ENCODE measurements at regions of chr15 and their contacts with region 1.

Region 1: DNA sequence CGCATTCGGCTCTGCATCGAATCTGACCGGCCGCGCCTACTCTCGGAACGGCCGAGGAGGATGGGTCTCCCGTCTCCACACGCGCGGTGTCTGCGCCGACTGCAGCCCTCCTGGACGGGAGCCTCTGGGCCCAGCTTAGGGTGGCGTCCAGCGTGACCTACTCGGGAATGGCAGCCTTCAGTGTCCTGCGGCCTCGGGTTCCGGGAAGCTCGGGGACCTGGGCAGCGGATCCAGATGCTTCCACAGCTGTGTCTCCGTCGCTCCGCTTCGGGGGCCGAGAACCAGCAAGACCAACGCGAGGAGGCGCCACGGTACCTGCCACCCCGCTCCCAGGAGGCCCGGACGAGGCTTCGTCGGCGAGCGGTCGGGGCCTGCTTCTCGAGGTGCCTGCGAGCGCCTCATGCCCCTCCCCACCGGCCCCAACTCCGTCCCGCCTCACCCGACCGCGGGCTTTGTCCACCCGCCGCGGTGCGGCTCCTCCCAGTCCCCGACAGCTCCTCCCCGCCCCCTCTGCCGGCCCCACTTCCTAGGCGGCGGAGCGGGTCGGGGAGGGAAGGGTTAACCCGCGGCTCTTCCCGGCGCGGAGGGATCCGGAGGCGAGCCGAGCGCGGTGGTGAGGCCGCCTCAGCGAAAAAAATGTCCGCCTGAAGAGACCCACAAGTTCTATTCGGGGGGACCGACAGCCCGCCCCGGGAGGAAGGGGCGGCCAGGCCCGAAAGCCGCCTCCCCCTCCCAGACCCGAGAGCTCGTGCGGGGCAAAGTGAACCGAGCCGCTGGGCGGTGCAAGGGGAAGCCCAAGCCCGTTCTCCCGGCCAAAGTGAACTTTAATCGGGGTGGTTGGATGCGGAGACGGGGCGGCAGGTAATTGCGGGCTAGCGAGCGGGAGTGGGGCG is at the start of gene TCF12:
- DNase-seq: peak; percentile 96
- ATAC-seq: peak; percentile 95 to 98 (median 97)
- H3K4me3 ChIP-seq: peak within 1 kb of the TSS; percentile 84 to 97 (median 91)
- H3K27ac ChIP-seq: peak within 1 kb of the TSS; percentile 93 to 98 (median 98)
- H3K4me1 ChIP-seq: peaks cover 3 to 68% (median 60%) of the 10 kb centered on the region in 9 donors
- H3K27me3 ChIP-seq: no peaks in the 10 kb centered on the region
- CTCF ChIP-seq: peak in 8 of 9 donors; percentile 22 to 67 (median 51)
- total RNA-seq, gene TCF12: 29.2 to 55.7 (median 39.4) TPM

Region 2: DNA sequence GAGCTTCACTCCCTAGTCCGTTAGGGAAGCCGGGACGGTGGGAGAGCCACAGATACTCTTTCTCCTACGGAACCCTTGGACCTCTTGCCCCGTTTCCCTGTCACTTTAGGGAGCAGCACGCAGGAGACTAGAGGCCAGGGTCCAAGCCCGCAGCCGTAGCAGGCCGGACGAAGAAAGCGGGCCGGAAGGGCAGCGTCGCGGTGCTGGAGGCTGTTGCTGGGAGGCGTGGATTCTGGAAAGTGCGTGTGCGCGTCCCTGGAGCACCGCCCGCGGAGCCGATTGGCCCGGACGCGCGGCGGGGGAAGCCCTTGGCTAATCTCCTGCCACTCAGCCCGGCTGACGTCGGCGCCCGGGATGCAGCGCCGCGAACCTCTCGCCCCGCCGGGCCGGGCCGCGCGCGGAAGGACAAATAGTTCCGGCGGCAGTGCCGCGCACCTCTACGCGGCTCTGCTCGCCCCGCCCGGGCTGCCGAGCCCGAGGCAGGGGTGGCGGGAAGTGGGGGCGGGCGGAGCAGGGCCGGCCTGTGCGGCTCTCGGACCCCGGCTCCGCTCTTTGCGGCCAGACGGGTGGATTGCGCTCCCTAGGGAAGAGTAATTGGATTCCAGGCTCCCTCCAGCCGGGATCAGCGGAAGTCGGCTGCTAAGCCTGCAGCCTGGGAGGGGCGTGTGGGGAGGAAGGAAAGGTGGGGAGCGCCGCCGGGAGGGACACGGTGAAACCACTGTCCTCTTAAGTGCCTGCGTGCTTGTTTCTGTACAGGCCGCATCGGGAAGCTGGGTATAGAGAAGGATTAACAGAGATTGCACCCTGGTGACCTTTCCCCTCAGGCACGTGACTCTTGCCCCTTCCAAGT is 31.1 kb before region 1 on chr15:
- intact Hi-C with region 1: loop called in 8 of 10 experiments (anchors 1 to 2 kb)
- DNase-seq: peak; percentile 95 to 96
- ATAC-seq: peak; percentile 97 to 99 (median 98)
- H3K4me3 ChIP-seq: peak overlapping the region; percentile 51 to 78 (median 68)
- H3K27ac ChIP-seq: peak overlapping the region; percentile 96 to 99 (median 98)
- H3K4me1 ChIP-seq: peaks cover 0 to 33% (median 21%) of the 10 kb centered on the region in 9 donors
- H3K27me3 ChIP-seq: no peaks in the 10 kb centered on the region
- CTCF ChIP-seq: peak in 4 of 9 donors; percentile 10 to 32 (median 20)

Region 3: DNA sequence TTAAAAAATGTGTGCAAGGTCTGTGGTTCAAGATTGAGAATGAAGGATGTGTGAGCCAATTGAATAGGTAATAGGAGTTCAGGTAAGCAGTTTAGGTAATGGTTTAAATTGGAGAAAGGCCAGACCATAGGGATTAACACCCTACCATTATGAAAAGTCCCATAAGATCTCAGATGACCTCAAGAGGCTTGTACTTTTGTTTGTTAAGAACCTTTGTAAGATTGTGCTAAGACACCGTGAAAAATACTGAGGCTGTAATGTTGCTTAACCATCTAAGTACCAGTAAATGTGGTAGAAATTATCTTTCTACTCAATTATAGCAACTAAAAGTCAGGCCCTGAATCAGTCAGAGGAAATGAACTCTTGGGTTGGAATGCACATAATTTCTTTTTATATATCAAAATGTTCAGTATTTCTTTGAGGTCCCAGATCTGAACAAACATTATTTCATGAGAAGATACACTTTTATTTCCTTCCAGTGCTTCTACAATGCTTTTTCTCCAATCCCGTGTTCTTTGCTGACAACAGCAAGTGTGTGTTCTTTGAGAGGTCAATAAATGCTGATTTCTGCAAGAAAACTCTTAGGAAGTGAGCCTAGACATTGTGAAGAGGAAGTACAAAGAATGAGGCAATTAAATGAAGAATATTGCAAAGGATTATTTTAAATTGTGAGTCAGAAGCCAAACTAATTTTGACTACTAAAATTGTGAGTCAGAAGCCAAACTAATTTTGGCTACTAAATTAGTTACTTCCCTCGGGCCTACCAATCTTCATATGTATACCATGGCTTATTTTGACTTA is 66.6 kb after region 1 on chr15:
- intact Hi-C with region 1: loop called in 1 of 10 experiments (anchors 5 kb)
- DNase-seq: no peak
- ATAC-seq: peak in 5 of 8 donors; percentile 38 to 73 (median 57)
- H3K4me3 ChIP-seq: no peak overlapping the region
- H3K27ac ChIP-seq: peak overlapping the region in 3 of 10 donors; percentile 23 to 56 (median 33)
- H3K4me1 ChIP-seq: peaks cover 2 to 92% (median 71%) of the 10 kb centered on the region in 9 donors
- H3K27me3 ChIP-seq: no peaks in the 10 kb centered on the region
- CTCF ChIP-seq: no peak

Region 4: DNA sequence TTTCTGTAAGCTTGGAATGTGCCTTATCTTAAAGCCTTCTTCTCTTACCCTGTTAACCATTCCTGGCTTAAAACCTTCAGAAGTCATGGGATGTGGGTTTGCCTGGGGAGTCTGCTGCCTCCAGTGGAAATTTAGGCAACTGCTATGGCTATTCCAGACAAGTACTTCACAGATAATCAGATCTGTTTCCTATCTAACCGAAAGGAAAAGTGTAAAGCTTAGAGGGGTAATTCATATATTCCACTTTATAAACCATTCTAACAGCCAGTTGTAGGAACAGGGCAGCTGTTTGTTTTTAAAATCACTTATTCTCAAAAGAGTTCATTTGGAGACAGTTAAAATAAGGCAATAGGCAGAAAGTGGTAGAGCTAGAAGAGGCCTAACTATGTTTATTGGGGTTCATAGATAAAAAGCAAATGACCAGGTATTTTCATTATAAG is 220.1 kb after region 1 on chr15:
- intact Hi-C with region 1: loop called in 8 of 10 experiments (anchors 5 to 10 kb)
- DNase-seq: peak in 1 of 2 donors; percentile 42
- ATAC-seq: peak; percentile 25 to 81 (median 71)
- H3K4me3 ChIP-seq: no peak overlapping the region
- H3K27ac ChIP-seq: no peak overlapping the region
- H3K4me1 ChIP-seq: peaks cover 0 to 48% (median 42%) of the 10 kb centered on the region in 9 donors
- H3K27me3 ChIP-seq: no peaks in the 10 kb centered on the region
- CTCF ChIP-seq: peak; percentile 70 to 88 (median 78)

Region 5: GRCh38 chr15:57306161-57306943 is 388.1 kb after region 1 on chr15:
- intact Hi-C with region 1: loop called in 1 of 10 experiments (anchors 10 kb)
- DNase-seq: peak; percentile 87 to 92
- ATAC-seq: peak; percentile 88 to 95 (median 91)
- H3K4me3 ChIP-seq: peak overlapping the region; percentile 19 to 84 (median 58)
- H3K27ac ChIP-seq: peak overlapping the region in 6 of 10 donors; percentile 30 to 54 (median 34)
- H3K4me1 ChIP-seq: peaks cover 0 to 18% (median 12%) of the 10 kb centered on the region in 9 donors
- H3K27me3 ChIP-seq: no peaks in the 10 kb centered on the region
- CTCF ChIP-seq: peak; percentile 82 to 96 (median 91)

Measured in heart right ventricle (tissue), 16 donors.